ENCODE measurements at regions of chr12 and their contacts with region 1.

Region 1: GRCh38 chr12:120528861-120529525 is at the start of gene COQ5:
- DNase-seq: peak; percentile 88
- H3K4me3 Mint-ChIP-seq: peak within 1 kb of the TSS; percentile 100
- H3K27ac Mint-ChIP-seq: peak within 1 kb of the TSS; percentile 97
- H3K4me1 Mint-ChIP-seq: peaks cover 29% of the 10 kb centered on the region
- H3K27me3 Mint-ChIP-seq: no peaks in the 10 kb centered on the region
- total RNA-seq, gene COQ5: 30.3 to 30.8 TPM

Region 2: GRCh38 chr12:120032242-120032641 is 496.8 kb before region 1 on chr12:
- CTCF ChIA-PET with region 1: no interaction called
- POLR2A ChIA-PET with region 1: no interaction called
- DNase-seq: no peak
- H3K4me3 Mint-ChIP-seq: no peak overlapping the region
- H3K27ac Mint-ChIP-seq: no peak overlapping the region
- H3K4me1 Mint-ChIP-seq: no peaks in the 10 kb centered on the region
- H3K27me3 Mint-ChIP-seq: no peaks in the 10 kb centered on the region

Region 3: DNA sequence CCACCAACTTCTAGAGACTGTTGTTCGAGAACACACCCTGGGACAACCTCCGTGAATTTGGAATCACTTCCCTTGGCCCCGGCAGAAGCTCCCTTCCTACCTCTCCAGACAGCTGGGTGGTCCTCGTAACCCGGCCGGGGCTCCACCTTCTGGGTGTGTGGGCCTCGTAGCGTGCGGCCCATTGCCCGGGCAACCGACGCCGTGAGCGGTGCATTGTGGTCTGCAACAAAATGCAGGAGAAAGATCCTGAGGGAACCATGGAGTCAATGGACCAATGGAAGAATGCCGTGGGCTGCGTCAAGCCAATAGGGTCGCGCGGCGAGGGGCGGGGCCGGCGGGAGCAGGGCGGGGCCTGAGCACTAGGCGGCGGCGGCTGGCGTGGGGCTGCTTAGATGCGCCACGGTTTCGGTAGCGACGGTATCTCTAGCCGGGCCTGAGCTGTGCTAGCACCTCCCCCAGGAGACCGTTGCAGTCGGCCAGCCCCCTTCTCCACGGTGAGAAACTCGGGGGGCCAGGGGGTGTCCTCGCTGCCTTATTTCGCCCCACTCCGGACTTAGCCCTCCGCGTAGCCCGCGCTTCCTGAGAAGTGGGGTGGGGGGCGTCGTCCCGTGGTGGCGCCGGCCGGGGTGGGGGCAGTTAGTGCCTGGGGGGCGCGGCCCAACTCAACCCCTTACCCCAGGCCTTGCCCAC is 33.1 kb before region 1 on chr12 and contains the start of gene DYNLL1:
- CTCF ChIA-PET with region 1: interaction called, 3 read pairs
- POLR2A ChIA-PET with region 1: interaction called, 15 read pairs
- DNase-seq: peak; percentile 97
- H3K4me3 Mint-ChIP-seq: peak within 1 kb of the TSS; percentile 88
- H3K27ac Mint-ChIP-seq: peak within 1 kb of the TSS; percentile 69
- H3K4me1 Mint-ChIP-seq: peaks cover 38% of the 10 kb centered on the region
- H3K27me3 Mint-ChIP-seq: no peaks in the 10 kb centered on the region
- total RNA-seq, gene DYNLL1: 209 to 216 TPM

Region 4: GRCh38 chr12:120504587-120504986 is 24.4 kb before region 1 on chr12:
- CTCF ChIA-PET with region 1: interaction called, 3 read pairs
- POLR2A ChIA-PET with region 1: interaction called, 12 read pairs
- DNase-seq: no peak
- H3K4me3 Mint-ChIP-seq: no peak overlapping the region
- H3K27ac Mint-ChIP-seq: no peak overlapping the region
- H3K4me1 Mint-ChIP-seq: peaks cover 6% of the 10 kb centered on the region
- H3K27me3 Mint-ChIP-seq: no peaks in the 10 kb centered on the region

Region 5: GRCh38 chr12:120562906-120563305 is 33.9 kb after region 1 on chr12:
- CTCF ChIA-PET with region 1: no interaction called
- POLR2A ChIA-PET with region 1: no interaction called
- DNase-seq: no peak
- H3K4me3 Mint-ChIP-seq: no peak overlapping the region
- H3K27ac Mint-ChIP-seq: no peak overlapping the region
- H3K4me1 Mint-ChIP-seq: no peaks in the 10 kb centered on the region
- H3K27me3 Mint-ChIP-seq: no peaks in the 10 kb centered on the region